ENCODE measurements at regions of chr12 and their contacts with region 1.

Region 1: DNA sequence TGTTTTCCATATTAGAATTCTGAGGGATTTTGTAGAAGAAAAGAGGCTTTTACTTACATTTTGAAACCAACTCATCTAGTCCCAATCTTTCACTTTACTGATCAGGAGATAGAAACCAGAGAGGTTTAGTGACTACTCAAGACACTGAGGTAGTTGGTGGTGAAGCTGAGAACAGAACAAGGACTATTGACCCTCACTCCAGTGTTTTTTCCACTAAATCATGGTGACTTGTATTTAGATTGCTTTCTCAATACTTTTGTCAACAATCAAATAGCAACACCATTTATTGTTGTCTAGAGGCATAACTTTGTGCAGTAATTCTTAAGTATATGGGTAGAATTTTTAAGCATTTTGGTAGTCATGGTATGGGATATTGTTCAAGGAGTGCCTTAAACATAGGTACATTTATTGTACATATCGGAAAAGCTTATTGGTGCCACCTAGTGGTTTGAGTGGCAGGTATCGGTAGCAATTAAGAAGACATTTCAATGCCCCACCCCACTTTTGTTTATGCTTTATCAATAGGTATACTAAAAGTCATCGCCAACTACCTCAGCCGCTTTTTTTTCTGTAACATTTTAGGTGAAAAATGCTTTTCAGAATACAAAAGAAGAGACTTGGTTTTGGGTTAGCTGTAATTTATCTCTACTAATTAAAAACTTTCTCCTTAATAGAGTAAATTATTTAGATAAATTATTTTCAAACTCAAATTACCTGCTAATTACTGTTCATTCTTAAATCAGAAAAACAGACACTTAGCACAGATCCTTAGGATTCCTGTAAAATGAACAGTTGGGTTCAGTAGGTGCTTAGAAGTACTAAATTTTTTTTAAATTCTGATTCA is 47.3 kb upstream of the PAWR start:
- DNase-seq: no peak
- ATAC-seq: peak in 1 of 2 donors; percentile 27

Region 2: DNA sequence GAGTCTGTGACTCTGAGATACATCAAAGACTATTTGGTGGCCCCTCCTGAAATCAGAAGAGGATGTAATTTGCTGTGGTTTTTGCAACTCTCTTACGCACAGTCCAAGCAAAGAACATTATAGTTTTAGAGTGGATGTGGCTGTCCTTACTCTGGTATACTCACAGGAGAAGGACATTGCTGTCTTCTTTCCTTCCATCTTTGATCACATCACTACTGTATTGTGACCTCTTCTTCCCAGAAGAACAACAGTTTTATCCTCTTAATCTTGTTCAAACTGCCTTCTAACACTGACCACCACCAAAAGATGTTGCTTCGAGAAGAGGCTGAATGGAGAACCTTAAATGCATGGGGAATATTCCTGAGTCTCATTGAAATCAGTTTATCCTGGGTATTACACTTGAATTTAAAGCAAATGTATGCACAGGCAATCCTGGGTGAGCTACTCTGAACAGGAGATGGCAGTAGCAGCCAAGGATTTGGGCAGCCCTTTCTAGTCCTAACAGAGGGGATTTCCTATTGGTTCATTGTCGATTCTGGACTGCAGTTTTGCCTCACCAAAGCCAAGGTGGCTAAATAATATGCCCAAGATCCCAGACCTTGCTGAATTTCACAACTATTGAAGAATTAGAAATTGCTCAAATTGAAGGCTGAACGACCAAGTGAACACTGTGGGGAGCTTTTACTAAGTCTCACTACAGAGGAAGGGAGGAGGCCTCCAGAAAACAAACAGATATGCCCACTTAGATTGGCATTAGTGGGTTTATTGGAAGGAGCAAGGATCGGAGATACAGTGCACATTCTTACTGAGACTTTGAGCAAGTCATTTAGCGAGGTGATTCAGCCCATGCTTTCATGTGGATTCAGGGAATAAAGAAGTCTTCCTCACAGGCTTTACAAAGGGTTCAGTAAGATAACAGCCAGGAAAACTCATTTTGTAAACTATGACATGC is 330.1 kb before region 1 on chr12:
- intact Hi-C with region 1: loop called in 1 of 2 experiments (anchors 5 kb)
- DNase-seq: peak; percentile 49
- ATAC-seq: peak; percentile 93 to 94

Region 3: DNA sequence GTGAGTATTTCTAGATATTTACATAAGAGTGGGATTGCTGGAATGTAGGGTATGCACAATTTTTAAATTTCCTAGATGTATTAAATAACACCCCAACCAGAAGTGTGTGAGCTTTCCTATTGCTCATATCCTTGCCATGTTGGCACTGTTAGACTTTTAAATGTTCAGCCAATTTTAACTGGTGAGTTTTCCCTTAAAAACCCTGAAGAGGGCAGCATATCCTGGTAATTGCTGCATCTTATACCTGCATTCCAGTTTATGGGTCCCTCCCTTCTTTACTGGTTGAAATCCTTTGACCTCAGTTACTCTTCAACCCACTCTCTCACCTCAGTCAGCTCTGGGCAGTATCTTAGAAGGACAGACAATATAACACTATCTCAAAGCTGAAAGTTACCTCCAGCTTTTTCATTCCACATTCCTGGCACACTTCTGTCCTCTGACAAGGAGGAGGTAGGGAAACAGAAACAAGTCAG is 317.9 kb before region 1 on chr12:
- intact Hi-C with region 1: loop called in 1 of 2 experiments (anchors 2 kb)
- DNase-seq: no peak
- ATAC-seq: peak; percentile 81 to 95

Region 4: DNA sequence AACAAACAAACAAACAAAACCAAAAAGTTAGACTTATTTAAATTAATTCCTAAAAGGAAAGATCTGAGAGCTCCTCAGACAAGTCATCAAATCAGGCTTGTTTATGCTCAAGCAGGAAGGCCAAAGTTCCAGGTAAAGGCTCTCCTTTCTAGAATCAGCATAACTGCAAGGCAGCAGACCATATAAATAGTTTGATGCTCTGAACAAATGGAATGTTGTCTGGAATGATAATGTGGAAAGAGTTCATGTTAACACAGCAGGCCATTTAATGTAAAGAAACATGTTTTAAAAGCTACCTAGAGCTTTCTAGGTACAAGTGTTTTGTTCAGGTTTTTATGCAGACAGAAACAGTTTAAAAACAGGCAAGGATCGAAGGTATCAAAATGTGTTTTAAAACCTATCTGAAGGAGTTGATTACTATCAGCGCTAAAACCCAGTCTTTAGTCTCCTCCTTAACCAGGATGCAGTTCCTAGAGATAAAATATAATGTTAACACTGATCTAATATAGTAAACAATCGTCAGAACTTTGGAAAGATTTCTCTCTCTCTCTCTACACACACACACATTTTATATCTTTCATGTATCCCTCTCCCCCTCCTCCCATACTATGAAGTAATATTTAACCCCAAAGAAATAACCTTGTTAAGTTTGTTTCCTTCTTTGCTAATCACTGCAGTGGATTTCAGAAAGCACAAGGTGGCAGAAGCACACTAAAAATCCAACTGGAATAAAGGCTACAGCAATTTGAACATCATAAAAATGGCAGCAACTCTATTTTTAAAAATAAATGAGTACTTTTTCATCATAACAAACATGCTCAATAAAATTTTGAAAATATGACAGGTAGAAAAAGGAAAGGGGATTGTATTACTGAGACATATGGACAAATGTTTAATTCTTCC is 182.8 kb before region 1 on chr12:
- intact Hi-C with region 1: loop called (anchors 2 to 5 kb)
- DNase-seq: no peak
- ATAC-seq: peak; percentile 20 to 41

Measured in left cardiac atrium (tissue), 4 donors.